ENCODE measurements at regions of chr7 and their contacts with region 1.

Region 1: GRCh38 chr7:38215735-38216670 is 38.0 kb downstream of the STARD3NL start:
- DNase-seq: peak; percentile 75
- H3K4me3 Mint-ChIP-seq: no peak overlapping the region
- H3K27ac Mint-ChIP-seq: no peak overlapping the region
- H3K4me1 Mint-ChIP-seq: no peaks in the 10 kb centered on the region
- H3K27me3 Mint-ChIP-seq: no peaks in the 10 kb centered on the region
- CTCF ChIP-seq: peak; percentile 92

Region 2: DNA sequence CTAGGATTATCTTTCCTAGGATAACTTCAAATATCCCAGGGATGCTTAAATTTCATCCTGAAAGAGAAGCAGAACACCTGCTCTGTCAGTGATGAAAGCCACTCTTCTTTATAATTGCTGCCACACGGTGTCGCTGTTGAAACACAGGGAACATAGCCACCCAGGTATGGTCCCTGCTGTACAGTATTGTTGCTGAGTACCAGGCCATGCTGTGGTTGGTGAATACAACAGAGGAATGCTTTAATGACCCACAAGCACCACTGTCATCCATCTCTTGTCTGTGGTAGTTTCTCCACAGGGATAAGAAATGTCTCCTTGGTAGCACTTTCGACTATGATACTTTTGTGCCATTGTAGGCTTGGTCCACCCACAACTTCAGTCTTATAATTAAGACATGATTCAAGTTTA is 108.5 kb before region 1 on chr7:
- CTCF ChIA-PET with region 1: interaction called, 293 read pairs
- POLR2A ChIA-PET with region 1: no interaction called
- intact Hi-C with region 1: no loop called
- DNase-seq: peak; percentile 74
- H3K4me3 Mint-ChIP-seq: no peak overlapping the region
- H3K27ac Mint-ChIP-seq: no peak overlapping the region
- H3K4me1 Mint-ChIP-seq: no peaks in the 10 kb centered on the region
- H3K27me3 Mint-ChIP-seq: peaks cover 66% of the 10 kb centered on the region
- CTCF ChIP-seq: peak; percentile 68

Region 3: GRCh38 chr7:38178004-38178694 is 37.9 kb before region 1 on chr7 and contains the start of gene STARD3NL:
- CTCF ChIA-PET with region 1: interaction called, 13 read pairs
- POLR2A ChIA-PET with region 1: interaction called, 3 read pairs
- intact Hi-C with region 1: loop called (anchors 2 kb)
- DNase-seq: peak; percentile 100
- H3K4me3 Mint-ChIP-seq: peak within 1 kb of the TSS; percentile 99
- H3K27ac Mint-ChIP-seq: peak within 1 kb of the TSS; percentile 84
- H3K4me1 Mint-ChIP-seq: peaks cover 13% of the 10 kb centered on the region
- H3K27me3 Mint-ChIP-seq: peaks cover 19% of the 10 kb centered on the region
- CTCF ChIP-seq: no peak
- total RNA-seq, gene STARD3NL: 24.5 and 25.6 TPM in 2 replicates

Region 4: GRCh38 chr7:38318803-38319416 is 102.9 kb after region 1 on chr7:
- CTCF ChIA-PET with region 1: interaction called, 38 read pairs
- POLR2A ChIA-PET with region 1: no interaction called
- intact Hi-C with region 1: loop called (anchors 2 kb)
- DNase-seq: peak; percentile 68
- H3K4me3 Mint-ChIP-seq: no peak overlapping the region
- H3K27ac Mint-ChIP-seq: no peak overlapping the region
- H3K4me1 Mint-ChIP-seq: peaks cover 7% of the 10 kb centered on the region
- H3K27me3 Mint-ChIP-seq: peaks cover 26% of the 10 kb centered on the region
- CTCF ChIP-seq: peak; percentile 49

Region 5: DNA sequence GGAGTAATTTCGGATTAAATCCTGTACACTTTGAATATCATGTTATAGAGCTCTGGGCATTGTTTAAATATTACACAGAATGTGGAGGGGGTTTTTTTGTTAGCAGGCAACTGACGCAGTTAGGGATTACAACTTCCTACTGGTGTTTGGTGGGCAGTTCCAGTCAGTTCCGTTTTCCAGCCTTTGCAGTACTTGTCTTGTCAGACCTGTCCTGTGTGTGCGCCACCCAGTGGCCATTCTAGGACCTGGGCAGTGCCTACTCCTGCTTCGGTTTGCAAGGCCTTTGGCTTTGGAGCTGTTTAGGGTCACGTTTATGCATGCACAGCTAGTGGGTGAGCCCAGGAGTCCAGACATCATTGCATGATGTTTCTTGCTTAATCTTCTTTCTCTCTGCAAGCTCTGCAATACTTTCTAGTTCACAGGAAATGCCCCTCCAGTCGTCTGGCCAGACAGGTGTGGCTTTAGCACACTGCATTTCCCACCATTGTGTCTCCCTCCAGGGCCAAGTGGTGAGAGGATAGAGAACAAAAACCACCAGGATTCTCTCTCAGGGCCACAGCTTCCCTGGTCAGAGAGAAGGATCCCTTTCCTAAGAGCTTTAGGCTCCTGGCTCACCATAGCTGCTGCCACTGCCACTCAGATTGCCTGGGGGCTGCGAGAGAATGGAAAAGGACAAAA is 154.0 kb after region 1 on chr7:
- CTCF ChIA-PET with region 1: interaction called, 10 read pairs
- POLR2A ChIA-PET with region 1: no interaction called
- intact Hi-C with region 1: no loop called
- DNase-seq: peak; percentile 84
- H3K4me3 Mint-ChIP-seq: no peak overlapping the region
- H3K27ac Mint-ChIP-seq: no peak overlapping the region
- H3K4me1 Mint-ChIP-seq: peaks cover 6% of the 10 kb centered on the region
- H3K27me3 Mint-ChIP-seq: peaks cover 12% of the 10 kb centered on the region
- CTCF ChIP-seq: peak; percentile 75

Measured in MCF 10A (cell line).